ENCODE measurements at regions of chr10 and their contacts with region 1.

Region 1: DNA sequence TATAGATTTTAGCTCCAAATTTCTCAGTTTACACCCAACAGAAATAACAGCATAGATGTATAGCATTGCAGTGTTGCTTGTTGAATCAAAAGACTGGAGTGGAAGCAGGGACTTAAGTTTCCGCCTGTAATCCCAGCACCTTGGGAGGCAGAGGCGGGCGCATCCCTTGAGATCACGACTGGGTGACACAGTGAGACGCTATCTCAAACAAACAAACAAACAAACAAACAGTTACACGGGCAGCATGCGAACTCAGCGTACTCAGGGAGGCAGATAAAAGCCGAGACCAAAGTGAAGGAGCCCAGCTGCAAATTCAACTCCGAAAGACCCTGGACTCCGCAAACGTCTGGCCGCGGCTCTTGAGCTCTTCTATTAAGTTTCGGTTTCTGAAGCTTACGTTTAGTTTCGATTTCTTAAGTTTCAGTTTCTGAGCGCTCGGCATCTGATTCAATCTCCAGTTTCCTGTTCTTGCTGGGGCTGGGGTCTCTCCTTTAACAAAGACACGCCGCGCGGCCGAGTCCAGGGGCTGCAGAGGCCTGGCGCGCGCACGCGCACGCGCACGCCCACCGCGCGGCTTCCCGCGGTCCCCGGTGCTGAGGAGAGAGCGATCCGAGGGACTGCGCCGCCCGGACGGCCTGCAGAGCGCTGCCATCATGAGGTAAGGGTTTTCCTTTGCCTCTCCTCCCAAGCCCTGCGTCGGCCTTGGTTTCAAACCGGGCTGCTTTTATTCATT is at the start of gene IFIT5:
- DNase-seq: peak; percentile 70
- ATAC-seq: peak; percentile 72
- H3K4me3 Mint-ChIP-seq: peak within 1 kb of the TSS; percentile 94
- H3K27ac Mint-ChIP-seq: peak within 1 kb of the TSS; percentile 99
- H3K4me1 Mint-ChIP-seq: peaks cover 46% of the 10 kb centered on the region
- H3K27me3 Mint-ChIP-seq: no peaks in the 10 kb centered on the region
- CTCF ChIP-seq: no peak
- total RNA-seq, gene IFIT5: 20.0 and 21.3 TPM in 2 replicates

Region 2: DNA sequence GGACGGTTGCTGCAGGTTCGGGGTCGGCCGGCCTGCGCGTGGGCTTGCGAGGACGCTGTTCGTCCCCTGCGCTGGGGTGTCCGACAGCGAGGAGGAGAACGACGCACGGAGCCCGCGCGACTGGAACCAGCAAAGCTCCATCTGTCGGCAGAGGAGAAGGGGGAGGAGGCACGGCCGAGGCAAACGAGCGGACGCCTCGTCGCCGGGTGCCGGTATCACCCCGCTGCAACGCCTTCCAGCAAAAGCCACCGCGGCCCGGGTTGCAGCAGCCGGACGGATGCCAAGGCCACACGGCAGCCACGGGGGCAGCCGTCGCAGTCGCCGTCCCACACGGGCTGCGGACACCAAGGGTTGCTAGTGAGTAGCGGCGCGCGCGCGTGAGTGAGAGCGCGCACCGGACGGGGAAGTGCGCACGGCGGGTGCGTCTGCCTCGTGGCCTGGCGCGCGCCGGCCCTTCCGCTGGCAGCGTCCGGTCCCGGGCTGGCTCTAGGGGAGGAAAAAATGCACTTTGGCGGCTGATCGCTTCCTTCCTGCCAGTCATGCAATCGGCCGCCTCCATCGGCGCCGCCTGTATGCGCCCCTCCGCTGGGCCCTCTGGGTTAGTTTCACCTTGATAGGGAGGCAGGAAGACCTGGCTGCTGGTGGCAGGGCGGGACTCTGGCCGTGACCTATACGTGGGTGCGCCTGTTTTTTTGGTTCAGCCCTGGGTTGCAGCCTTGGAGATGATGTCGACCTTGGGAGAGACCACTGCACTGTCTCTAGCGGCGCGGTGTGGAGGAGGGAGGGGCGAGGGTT is 533.8 kb before region 1 on chr10:
- CTCF ChIA-PET with region 1: no interaction called
- POLR2A ChIA-PET with region 1: interaction called, 3 read pairs
- intact Hi-C with region 1: loop called (anchors 5 kb)
- DNase-seq: peak; percentile 77
- ATAC-seq: peak; percentile 71
- H3K4me3 Mint-ChIP-seq: peak overlapping the region; percentile 96
- H3K27ac Mint-ChIP-seq: peak overlapping the region; percentile 99
- H3K4me1 Mint-ChIP-seq: peaks cover 52% of the 10 kb centered on the region
- H3K27me3 Mint-ChIP-seq: no peaks in the 10 kb centered on the region
- CTCF ChIP-seq: no peak

Region 3: DNA sequence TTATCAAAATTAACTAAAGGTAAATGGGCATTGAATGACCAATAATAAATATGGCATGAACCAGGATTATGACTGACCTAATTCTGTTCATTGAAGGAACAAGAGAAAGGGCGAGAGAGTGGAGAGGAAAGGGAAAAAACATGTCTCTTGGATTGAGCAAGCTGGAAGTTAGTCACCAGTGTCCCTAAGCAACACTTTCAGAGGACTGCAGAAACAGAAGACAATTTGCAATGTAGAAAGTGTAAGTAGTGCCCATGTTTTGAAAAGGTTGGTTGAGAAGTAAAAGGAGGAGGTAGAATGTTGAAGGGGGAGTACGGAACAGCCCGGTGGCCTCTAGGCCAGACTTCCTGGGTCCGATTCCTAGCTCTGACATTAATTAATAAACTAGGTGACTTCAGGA is 329.2 kb before region 1 on chr10:
- CTCF ChIA-PET with region 1: no interaction called
- POLR2A ChIA-PET with region 1: no interaction called
- intact Hi-C with region 1: loop called (anchors 2 kb)
- DNase-seq: no peak
- ATAC-seq: no peak
- H3K4me3 Mint-ChIP-seq: no peak overlapping the region
- H3K27ac Mint-ChIP-seq: no peak overlapping the region
- H3K4me1 Mint-ChIP-seq: peaks cover 2% of the 10 kb centered on the region
- H3K27me3 Mint-ChIP-seq: no peaks in the 10 kb centered on the region
- CTCF ChIP-seq: no peak

Region 4: GRCh38 chr10:89183571-89183970 is 230.7 kb before region 1 on chr10:
- CTCF ChIA-PET with region 1: no interaction called
- POLR2A ChIA-PET with region 1: no interaction called
- intact Hi-C with region 1: no loop called
- DNase-seq: no peak
- ATAC-seq: no peak
- H3K4me3 Mint-ChIP-seq: no peak overlapping the region
- H3K27ac Mint-ChIP-seq: no peak overlapping the region
- H3K4me1 Mint-ChIP-seq: peaks cover 14% of the 10 kb centered on the region
- H3K27me3 Mint-ChIP-seq: peaks cover 13% of the 10 kb centered on the region
- CTCF ChIP-seq: no peak

Region 5: GRCh38 chr10:89301721-89302445 is 112.4 kb before region 1 on chr10 and contains the start of gene IFIT2:
- CTCF ChIA-PET with region 1: interaction called, 4 read pairs
- POLR2A ChIA-PET with region 1: interaction called, 14 read pairs
- intact Hi-C with region 1: loop called (anchors 1 kb)
- DNase-seq: no peak
- ATAC-seq: peak; percentile 86
- H3K4me3 Mint-ChIP-seq: peak within 1 kb of the TSS; percentile 91
- H3K27ac Mint-ChIP-seq: peak within 1 kb of the TSS; percentile 98
- H3K4me1 Mint-ChIP-seq: peaks cover 45% of the 10 kb centered on the region
- H3K27me3 Mint-ChIP-seq: no peaks in the 10 kb centered on the region
- CTCF ChIP-seq: no peak
- total RNA-seq, gene IFIT2: 4.9 and 5.7 TPM in 2 replicates

Region 6: GRCh38 chr10:89369156-89370105 is 44.9 kb before region 1 on chr10:
- CTCF ChIA-PET with region 1: no interaction called
- POLR2A ChIA-PET with region 1: no interaction called
- intact Hi-C with region 1: no loop called
- DNase-seq: no peak
- ATAC-seq: no peak
- H3K4me3 Mint-ChIP-seq: no peak overlapping the region
- H3K27ac Mint-ChIP-seq: no peak overlapping the region
- H3K4me1 Mint-ChIP-seq: peaks cover 6% of the 10 kb centered on the region
- H3K27me3 Mint-ChIP-seq: peaks cover 2% of the 10 kb centered on the region
- CTCF ChIP-seq: no peak

Region 7: GRCh38 chr10:89391917-89392756 is 22.2 kb before region 1 on chr10 and contains the start of gene IFIT1:
- CTCF ChIA-PET with region 1: interaction called, 4 read pairs
- POLR2A ChIA-PET with region 1: interaction called, 14 read pairs
- intact Hi-C with region 1: loop called (anchors 1 kb)
- DNase-seq: no peak
- ATAC-seq: peak; percentile 84
- H3K4me3 Mint-ChIP-seq: peak within 1 kb of the TSS; percentile 87
- H3K27ac Mint-ChIP-seq: peak within 1 kb of the TSS; percentile 85
- H3K4me1 Mint-ChIP-seq: peaks cover 18% of the 10 kb centered on the region
- H3K27me3 Mint-ChIP-seq: no peaks in the 10 kb centered on the region
- CTCF ChIP-seq: no peak
- total RNA-seq, gene IFIT1: 0.95 and 1.3 TPM in 2 replicates

Region 8: GRCh38 chr10:89701238-89702120 is 287.2 kb after region 1 on chr10 and contains the start of gene KIF20B:
- CTCF ChIA-PET with region 1: no interaction called
- POLR2A ChIA-PET with region 1: interaction called, 3 read pairs
- intact Hi-C with region 1: loop called (anchors 1 kb)
- DNase-seq: peak; percentile 91
- ATAC-seq: peak; percentile 97
- H3K4me3 Mint-ChIP-seq: peak within 1 kb of the TSS; percentile 96
- H3K27ac Mint-ChIP-seq: peak within 1 kb of the TSS; percentile 98
- H3K4me1 Mint-ChIP-seq: peaks cover 39% of the 10 kb centered on the region
- H3K27me3 Mint-ChIP-seq: no peaks in the 10 kb centered on the region
- CTCF ChIP-seq: no peak
- total RNA-seq, gene KIF20B: 23.8 and 24.0 TPM in 2 replicates

Region 9: GRCh38 chr10:90857635-90858460 is 1443.5 kb after region 1 on chr10 and contains the start of gene HTR7:
- CTCF ChIA-PET with region 1: no interaction called
- POLR2A ChIA-PET with region 1: no interaction called
- intact Hi-C with region 1: loop called (anchors 5 kb)
- DNase-seq: peak; percentile 81
- ATAC-seq: peak; percentile 83
- H3K4me3 Mint-ChIP-seq: peak within 1 kb of the TSS; percentile 87
- H3K27ac Mint-ChIP-seq: peak within 1 kb of the TSS; percentile 24
- H3K4me1 Mint-ChIP-seq: peaks cover 8% of the 10 kb centered on the region
- H3K27me3 Mint-ChIP-seq: peaks cover 29% of the 10 kb centered on the region
- CTCF ChIP-seq: no peak
- total RNA-seq, gene HTR7: not detected in 2 replicates